BJ (cell line): ENCODE measurements at regions of chr1 and their contacts with region 1.

Region 1: GRCh38 chr1:29083317-29084195 is 40.1 kb downstream of the TMEM200B start:
- DNase-seq: peak; percentile 4
- H3K4me3 ChIP-seq: no peak overlapping the region
- H3K27me3 ChIP-seq: no peaks in the 10 kb centered on the region
- CTCF ChIP-seq: no peak

Region 2: GRCh38 chr1:29062157-29062942 is 21.2 kb before region 1 on chr1:
- CTCF ChIA-PET with region 1: no interaction called
- POLR2A ChIA-PET with region 1: no interaction called
- DNase-seq: no peak
- H3K4me3 ChIP-seq: no peak overlapping the region
- H3K27me3 ChIP-seq: no peaks in the 10 kb centered on the region
- CTCF ChIP-seq: no peak

Region 3: GRCh38 chr1:29096231-29096886 is 12.8 kb after region 1 on chr1:
- CTCF ChIA-PET with region 1: no interaction called
- POLR2A ChIA-PET with region 1: no interaction called
- DNase-seq: no peak
- H3K4me3 ChIP-seq: no peak overlapping the region
- H3K27me3 ChIP-seq: no peaks in the 10 kb centered on the region
- CTCF ChIP-seq: no peak

Region 4: DNA sequence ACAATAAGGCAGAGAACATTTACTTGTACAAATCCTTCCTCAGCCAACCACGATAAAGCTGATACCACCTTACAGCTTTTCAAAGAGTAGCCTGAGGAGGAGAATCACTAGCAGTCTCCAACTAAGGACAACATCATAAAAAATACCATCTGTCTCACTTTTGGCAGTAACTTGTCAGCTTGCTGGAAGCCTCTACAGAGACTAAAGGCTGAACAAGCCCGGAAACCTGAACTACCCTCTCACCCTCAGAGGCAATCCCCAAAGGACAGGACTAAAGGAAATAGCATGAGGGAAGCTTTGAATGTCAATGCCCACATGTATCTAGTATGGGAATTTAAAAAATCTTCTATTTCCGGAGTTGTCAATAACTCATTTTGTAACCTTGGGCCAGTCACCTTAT is 87.5 kb after region 1 on chr1:
- CTCF ChIA-PET with region 1: no interaction called
- POLR2A ChIA-PET with region 1: interaction called, 10 read pairs
- DNase-seq: no peak
- H3K4me3 ChIP-seq: no peak overlapping the region
- H3K27me3 ChIP-seq: no peaks in the 10 kb centered on the region
- CTCF ChIP-seq: no peak